Psoas muscle (tissue), 8 donors: ENCODE measurements at regions of chr5 and their contacts with region 1.

Region 1: DNA sequence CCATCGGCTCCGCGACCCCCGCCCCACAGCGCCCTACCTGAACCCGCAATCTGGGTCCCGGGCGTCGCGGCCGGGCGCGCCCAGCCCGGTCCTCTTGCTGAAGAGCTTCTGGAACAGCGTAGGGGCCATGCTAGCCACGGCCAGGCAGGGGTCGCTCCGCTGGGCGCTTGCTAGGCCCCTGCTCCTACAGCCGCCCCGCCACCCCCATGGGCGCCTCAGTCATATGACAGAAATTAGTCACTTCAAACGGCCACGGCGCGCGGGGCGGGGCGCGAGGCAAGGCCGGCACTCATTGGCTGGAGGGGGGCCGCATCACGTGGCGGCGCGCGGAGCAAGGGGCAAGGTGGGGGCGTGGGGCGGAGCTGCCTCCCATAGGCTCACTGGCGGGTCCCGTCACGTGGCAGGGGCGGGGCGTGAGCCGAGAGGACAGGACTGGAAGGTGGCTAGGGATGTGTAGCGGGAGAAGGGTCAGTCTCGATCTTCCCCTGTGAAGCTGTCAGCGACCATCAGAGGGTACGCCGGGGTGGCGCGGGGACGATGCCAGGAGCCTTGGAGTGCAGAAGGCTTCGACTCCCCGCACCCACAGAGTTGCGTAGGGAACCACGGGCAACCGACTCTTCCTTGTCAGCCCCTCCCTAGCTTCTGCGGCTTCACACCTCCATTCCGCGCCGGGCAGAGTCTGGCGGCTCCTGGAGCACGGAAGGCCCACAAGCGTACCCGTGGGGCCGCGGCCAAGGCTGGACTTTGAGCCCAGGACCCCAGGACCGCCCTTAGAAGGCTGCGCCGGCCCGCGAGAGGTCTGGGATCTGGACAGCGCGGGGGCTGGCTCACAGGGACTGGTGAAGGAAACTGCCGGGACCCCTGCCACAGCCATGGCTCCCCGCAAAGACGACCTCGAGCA is at the start of gene FNIP1:
- DNase-seq: peak; percentile 100
- ATAC-seq: peak; percentile 93 to 98 (median 95)
- H3K4me3 ChIP-seq: peak within 1 kb of the TSS; percentile 93
- H3K27ac ChIP-seq: peak within 1 kb of the TSS; percentile 100
- H3K4me1 ChIP-seq: peaks cover 45% of the 10 kb centered on the region
- H3K27me3 ChIP-seq: no peaks in the 10 kb centered on the region
- CTCF ChIP-seq: no peak
- total RNA-seq, gene FNIP1: 19.0 to 45.2 (median 30.1) TPM

Region 2: DNA sequence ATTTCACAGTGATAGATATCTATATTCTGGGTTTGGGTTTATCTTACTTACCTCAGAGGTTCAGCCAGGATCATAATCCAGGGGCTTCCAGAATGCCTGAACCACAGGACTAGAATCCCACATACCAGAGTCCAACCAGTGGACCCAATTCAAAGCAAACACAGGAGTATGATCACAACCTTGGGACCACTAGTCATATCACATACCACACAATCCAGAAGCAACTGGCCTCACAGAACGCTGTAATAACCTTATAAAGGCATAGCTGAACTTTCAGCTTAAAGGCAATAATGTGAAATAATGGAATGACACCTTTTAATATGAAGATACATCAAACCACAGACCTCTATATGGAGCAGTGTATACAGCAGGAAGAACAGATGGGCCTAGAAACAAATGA is 187.3 kb before region 1 on chr5:
- intact Hi-C with region 1: loop called in 1 of 2 experiments (anchors 10 kb)
- DNase-seq: no peak
- ATAC-seq: no peak
- H3K4me3 ChIP-seq: no peak overlapping the region
- H3K27ac ChIP-seq: no peak overlapping the region
- H3K4me1 ChIP-seq: peaks cover 35% of the 10 kb centered on the region
- H3K27me3 ChIP-seq: no peaks in the 10 kb centered on the region
- CTCF ChIP-seq: no peak

Region 3: GRCh38 chr5:131634996-131635754 is 161.9 kb before region 1 on chr5 and contains the start of gene RAPGEF6:
- intact Hi-C with region 1: loop called in 1 of 2 experiments (anchors 5 kb)
- DNase-seq: peak; percentile 96 to 97
- ATAC-seq: peak; percentile 94 to 97 (median 96)
- H3K4me3 ChIP-seq: peak within 1 kb of the TSS; percentile 89
- H3K27ac ChIP-seq: peak within 1 kb of the TSS; percentile 95
- H3K4me1 ChIP-seq: peaks cover 43% of the 10 kb centered on the region
- H3K27me3 ChIP-seq: no peaks in the 10 kb centered on the region
- CTCF ChIP-seq: no peak
- total RNA-seq, gene RAPGEF6: 6.9 to 14.1 (median 7.4) TPM

Region 4: GRCh38 chr5:131706281-131706680 is 90.8 kb before region 1 on chr5:
- intact Hi-C with region 1: loop called (anchors 10 kb)
- DNase-seq: no peak
- ATAC-seq: no peak
- H3K4me3 ChIP-seq: no peak overlapping the region
- H3K27ac ChIP-seq: peak overlapping the region; percentile 37
- H3K4me1 ChIP-seq: peaks cover 27% of the 10 kb centered on the region
- H3K27me3 ChIP-seq: no peaks in the 10 kb centered on the region
- CTCF ChIP-seq: no peak

Region 5: DNA sequence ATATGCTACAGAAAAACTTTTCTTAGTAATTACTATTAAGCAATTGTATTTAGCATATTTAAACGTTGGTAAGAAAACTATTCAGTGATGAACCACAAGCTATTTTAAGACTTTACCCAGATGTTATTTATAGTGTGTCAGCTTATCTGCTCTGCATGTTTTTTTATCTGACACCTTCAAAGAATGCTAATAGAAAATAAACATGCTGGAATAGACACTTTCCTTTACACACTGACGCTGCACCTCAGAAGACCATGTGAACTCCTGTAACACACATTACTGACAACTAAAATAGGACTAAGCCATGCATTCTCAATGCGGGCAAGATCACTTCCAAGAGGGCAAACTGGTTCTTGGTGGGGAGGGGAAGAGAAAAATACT is 38.5 kb before region 1 on chr5:
- intact Hi-C with region 1: loop called in 1 of 2 experiments (anchors 5 kb)
- DNase-seq: no peak
- ATAC-seq: peak; percentile 70 to 91 (median 86)
- H3K4me3 ChIP-seq: peak overlapping the region; percentile 31
- H3K27ac ChIP-seq: peak overlapping the region; percentile 88
- H3K4me1 ChIP-seq: peaks cover 58% of the 10 kb centered on the region
- H3K27me3 ChIP-seq: no peaks in the 10 kb centered on the region
- CTCF ChIP-seq: no peak